CD4-positive, alpha-beta memory T cell (primary cell): ENCODE measurements at regions of chr19 and their contacts with region 1.

Region 1: GRCh38 chr19:35168207-35168606 is 13.7 kb downstream of the FXYD5 start:
- DNase-seq: no peak
- H3K4me3 ChIP-seq: no peak overlapping the region
- H3K4me3 Mint-ChIP-seq: peak overlapping the region in 4 of 8 donors; percentile 20 to 60 (median 48)
- H3K27ac ChIP-seq: peak overlapping the region; percentile 3
- H3K27ac Mint-ChIP-seq: peak overlapping the region; percentile 82 to 95 (median 91)
- H3K4me1 ChIP-seq: peaks cover 67% of the 10 kb centered on the region
- H3K4me1 Mint-ChIP-seq: peaks cover 31 to 80% (median 58%) of the 10 kb centered on the region in 4 donors
- H3K27me3 ChIP-seq: no peaks in the 10 kb centered on the region
- H3K27me3 Mint-ChIP-seq: no peaks in the 10 kb centered on the region

Region 2: GRCh38 chr19:35085947-35086346 is 82.3 kb before region 1 on chr19:
- CTCF ChIA-PET with region 1: no interaction called
- POLR2A ChIA-PET with region 1: no interaction called
- intact Hi-C with region 1: no loop called
- DNase-seq: no peak
- H3K4me3 ChIP-seq: no peak overlapping the region
- H3K4me3 Mint-ChIP-seq: peak overlapping the region in 1 of 8 donors; percentile 33
- H3K27ac ChIP-seq: no peak overlapping the region
- H3K27ac Mint-ChIP-seq: peak overlapping the region in 3 of 7 donors; percentile 30 to 85 (median 70)
- H3K4me1 ChIP-seq: peaks cover 18% of the 10 kb centered on the region
- H3K4me1 Mint-ChIP-seq: peaks cover 5 to 15% (median 7%) of the 10 kb centered on the region in 4 donors
- H3K27me3 ChIP-seq: no peaks in the 10 kb centered on the region
- H3K27me3 Mint-ChIP-seq: peaks cover 6 to 8% of the 10 kb centered on the region in 2 donors

Region 3: DNA sequence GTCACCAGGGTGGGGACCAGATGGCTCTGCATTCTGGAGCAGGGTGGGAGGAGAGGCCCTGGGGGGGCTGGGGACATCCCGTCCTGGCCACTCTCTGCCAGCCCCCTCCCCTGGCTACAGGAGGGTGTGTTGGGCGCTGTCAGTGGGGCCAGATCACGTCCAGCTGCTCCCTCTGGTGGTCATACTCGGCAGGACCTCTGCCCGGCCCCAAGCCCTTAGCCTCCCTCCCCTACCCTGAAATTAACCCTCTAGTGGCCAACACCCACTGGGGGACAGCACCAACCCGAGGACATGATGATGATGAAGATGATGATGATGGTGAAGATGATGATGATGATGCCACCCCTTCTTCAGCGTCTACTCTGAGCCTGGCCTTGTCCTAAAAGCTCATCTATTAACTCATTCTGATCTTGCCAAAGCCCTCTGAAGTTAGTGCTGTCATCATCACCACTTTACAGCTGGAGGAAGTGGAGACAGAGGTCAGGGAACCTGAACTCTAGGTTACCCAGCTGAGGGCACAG is 32.8 kb before region 1 on chr19:
- CTCF ChIA-PET with region 1: no interaction called
- POLR2A ChIA-PET with region 1: no interaction called
- intact Hi-C with region 1: no loop called
- DNase-seq: peak; percentile 48 to 66 (median 52)
- H3K4me3 ChIP-seq: no peak overlapping the region
- H3K4me3 Mint-ChIP-seq: no peak overlapping the region
- H3K27ac ChIP-seq: no peak overlapping the region
- H3K27ac Mint-ChIP-seq: peak overlapping the region in 2 of 7 donors; percentile 6 to 71
- H3K4me1 ChIP-seq: peaks cover 1% of the 10 kb centered on the region
- H3K4me1 Mint-ChIP-seq: peaks cover 2 to 21% (median 8%) of the 10 kb centered on the region in 4 donors
- H3K27me3 ChIP-seq: no peaks in the 10 kb centered on the region
- H3K27me3 Mint-ChIP-seq: no peaks in the 10 kb centered on the region

Region 4: DNA sequence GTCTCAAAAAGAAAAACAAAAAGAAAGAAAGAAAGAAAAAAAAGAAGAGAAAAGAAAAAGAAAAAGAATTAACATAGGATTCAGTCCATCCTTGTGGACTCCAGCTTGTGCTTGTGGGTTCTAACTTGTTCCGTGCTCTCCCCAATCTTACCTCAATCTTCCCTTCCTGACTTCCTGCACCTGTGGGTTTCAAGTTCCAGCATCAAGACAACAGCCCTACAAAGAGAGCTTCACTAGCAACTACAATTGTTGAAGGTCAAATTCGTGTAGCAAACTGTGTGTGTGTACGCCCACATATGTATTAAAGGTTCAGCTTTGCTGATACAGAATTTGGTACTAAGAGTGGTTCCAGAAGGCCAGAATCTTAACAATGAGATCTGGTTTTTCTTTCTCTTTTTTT is 11.6 kb after region 1 on chr19:
- CTCF ChIA-PET with region 1: no interaction called
- POLR2A ChIA-PET with region 1: interaction called, 140 read pairs
- intact Hi-C with region 1: no loop called
- DNase-seq: no peak
- H3K4me3 ChIP-seq: no peak overlapping the region
- H3K4me3 Mint-ChIP-seq: peak overlapping the region in 5 of 8 donors; percentile 21 to 90 (median 56)
- H3K27ac ChIP-seq: no peak overlapping the region
- H3K27ac Mint-ChIP-seq: peak overlapping the region in 5 of 7 donors; percentile 4 to 94 (median 80)
- H3K4me1 ChIP-seq: peaks cover 27% of the 10 kb centered on the region
- H3K4me1 Mint-ChIP-seq: peaks cover 24 to 62% (median 37%) of the 10 kb centered on the region in 4 donors
- H3K27me3 ChIP-seq: no peaks in the 10 kb centered on the region
- H3K27me3 Mint-ChIP-seq: no peaks in the 10 kb centered on the region

Region 5: DNA sequence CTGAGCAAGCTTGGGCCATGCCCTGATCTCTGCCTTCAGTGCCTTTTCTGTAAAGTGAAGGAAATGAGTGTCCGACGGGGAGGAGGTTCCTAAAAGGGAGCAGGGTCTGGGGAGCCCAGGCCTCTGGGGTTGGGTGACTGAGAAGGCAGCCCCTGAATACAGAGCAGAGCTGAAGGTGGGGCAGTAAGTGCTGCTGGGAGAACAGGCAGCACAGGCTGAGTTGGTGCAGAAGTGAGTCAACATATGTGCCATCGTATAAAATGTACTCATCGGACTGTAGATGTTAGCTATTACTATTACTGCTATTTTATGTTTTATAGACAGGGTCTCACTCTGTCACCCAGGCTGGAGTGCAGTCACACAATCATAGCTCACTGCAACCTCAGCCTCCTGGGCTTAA is 113.1 kb after region 1 on chr19:
- CTCF ChIA-PET with region 1: no interaction called
- POLR2A ChIA-PET with region 1: no interaction called
- intact Hi-C with region 1: no loop called
- DNase-seq: no peak
- H3K4me3 ChIP-seq: no peak overlapping the region
- H3K4me3 Mint-ChIP-seq: no peak overlapping the region
- H3K27ac ChIP-seq: no peak overlapping the region
- H3K27ac Mint-ChIP-seq: peak overlapping the region in 1 of 7 donors; percentile 67
- H3K4me1 ChIP-seq: no peaks in the 10 kb centered on the region
- H3K4me1 Mint-ChIP-seq: peaks cover 0 to 4% (median 3%) of the 10 kb centered on the region in 4 donors
- H3K27me3 ChIP-seq: no peaks in the 10 kb centered on the region
- H3K27me3 Mint-ChIP-seq: peaks cover 6 to 17% of the 10 kb centered on the region in 2 donors

Region 6: DNA sequence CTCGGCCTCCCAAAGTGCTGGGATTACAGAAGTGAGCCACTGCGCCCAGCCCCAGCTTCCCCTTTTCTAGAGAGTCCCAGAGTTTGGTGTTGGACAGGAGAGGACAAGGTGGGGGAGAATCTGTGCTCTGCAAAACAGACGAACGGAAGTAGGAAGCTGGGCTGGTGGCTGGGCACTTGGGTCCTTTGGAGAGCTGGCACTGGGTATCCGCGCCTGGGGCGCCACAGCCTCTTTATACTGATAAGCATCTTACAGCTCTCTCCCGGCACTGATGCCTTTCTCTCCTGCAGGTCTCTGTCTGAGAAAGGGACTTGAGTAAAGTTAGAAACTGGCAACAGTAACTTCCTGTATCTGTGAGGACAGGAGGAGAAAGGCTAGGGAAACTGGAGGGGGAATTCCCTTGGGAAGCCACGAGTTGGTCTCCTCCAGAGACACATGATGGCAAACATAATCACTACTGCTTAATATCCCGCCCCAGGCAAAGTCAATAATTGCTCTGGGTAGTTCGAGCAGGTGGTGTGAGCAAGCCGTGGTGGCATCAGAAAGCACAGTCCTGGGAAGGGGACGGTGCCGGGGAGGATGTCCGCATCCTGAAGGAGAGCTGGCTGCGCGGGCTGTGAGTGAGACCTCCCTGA is 281.0 kb after region 1 on chr19:
- CTCF ChIA-PET with region 1: no interaction called
- POLR2A ChIA-PET with region 1: no interaction called
- intact Hi-C with region 1: no loop called
- DNase-seq: no peak
- H3K4me3 ChIP-seq: no peak overlapping the region
- H3K4me3 Mint-ChIP-seq: peak overlapping the region in 2 of 8 donors; percentile 20 to 58
- H3K27ac ChIP-seq: no peak overlapping the region
- H3K27ac Mint-ChIP-seq: peak overlapping the region in 2 of 7 donors; percentile 9 to 27
- H3K4me1 ChIP-seq: peaks cover 39% of the 10 kb centered on the region
- H3K4me1 Mint-ChIP-seq: peaks cover 29 to 74% (median 53%) of the 10 kb centered on the region in 4 donors
- H3K27me3 ChIP-seq: no peaks in the 10 kb centered on the region
- H3K27me3 Mint-ChIP-seq: peaks cover 0 to 5% of the 10 kb centered on the region in 2 donors